A673 (cell line): ENCODE measurements at regions of chr3 and their contacts with region 1.

Region 1: GRCh38 chr3:151838583-151839312 is 24.8 kb downstream of the AADAC start:
- DNase-seq: peak; percentile 93
- H3K4me3 ChIP-seq: peak overlapping the region; percentile 36
- H3K27ac ChIP-seq: peak overlapping the region; percentile 47
- H3K4me1 ChIP-seq: peaks cover 36% of the 10 kb centered on the region
- H3K27me3 ChIP-seq: no peaks in the 10 kb centered on the region
- CTCF ChIP-seq: peak; percentile 92

Region 2: DNA sequence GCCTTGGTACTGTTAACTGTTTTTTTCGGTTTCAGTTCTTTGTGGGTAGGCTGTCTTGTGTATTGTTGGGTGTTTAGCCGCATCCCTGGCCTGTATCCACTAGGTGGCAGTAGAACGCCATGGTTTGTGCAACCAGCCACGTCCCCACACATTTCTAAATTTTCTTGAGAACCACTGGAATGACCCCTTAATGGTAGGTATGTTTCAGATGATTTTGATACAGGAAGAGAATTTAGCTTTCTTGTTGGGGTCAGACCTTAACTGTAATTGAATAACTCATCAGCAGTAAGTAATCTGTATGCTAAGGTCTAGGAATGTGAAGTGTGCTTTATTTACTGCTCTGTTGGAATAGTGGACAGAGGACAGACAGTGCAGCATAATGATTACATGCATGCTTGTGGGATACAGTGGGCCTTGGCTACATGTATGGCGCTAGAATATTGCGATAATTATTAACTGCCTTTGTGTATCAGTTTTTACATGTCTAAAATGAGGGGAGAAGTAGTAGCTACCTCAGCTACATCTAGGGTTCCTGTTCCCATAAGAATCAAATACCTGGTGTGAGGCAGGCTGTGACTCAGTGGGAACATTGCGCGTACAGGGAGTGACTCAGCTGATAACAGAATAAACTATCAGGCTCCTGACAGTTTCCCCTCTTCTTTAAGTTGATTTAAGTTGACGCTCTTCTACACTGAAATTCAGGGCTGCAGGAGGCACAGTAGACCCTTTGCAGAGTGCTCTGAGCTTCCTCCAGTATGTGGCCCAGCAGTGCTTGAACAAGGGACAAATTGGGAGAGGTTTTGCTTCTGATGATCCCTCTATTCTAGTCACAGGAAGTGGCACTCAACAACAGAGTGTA is 610.7 kb before region 1 on chr3:
- CTCF ChIA-PET with region 1: no interaction called
- POLR2A ChIA-PET with region 1: no interaction called
- intact Hi-C with region 1: loop called (anchors 2 kb)
- DNase-seq: peak; percentile 84
- H3K4me3 ChIP-seq: no peak overlapping the region
- H3K27ac ChIP-seq: no peak overlapping the region
- H3K4me1 ChIP-seq: no peaks in the 10 kb centered on the region
- H3K27me3 ChIP-seq: no peaks in the 10 kb centered on the region
- CTCF ChIP-seq: peak; percentile 93

Region 3: DNA sequence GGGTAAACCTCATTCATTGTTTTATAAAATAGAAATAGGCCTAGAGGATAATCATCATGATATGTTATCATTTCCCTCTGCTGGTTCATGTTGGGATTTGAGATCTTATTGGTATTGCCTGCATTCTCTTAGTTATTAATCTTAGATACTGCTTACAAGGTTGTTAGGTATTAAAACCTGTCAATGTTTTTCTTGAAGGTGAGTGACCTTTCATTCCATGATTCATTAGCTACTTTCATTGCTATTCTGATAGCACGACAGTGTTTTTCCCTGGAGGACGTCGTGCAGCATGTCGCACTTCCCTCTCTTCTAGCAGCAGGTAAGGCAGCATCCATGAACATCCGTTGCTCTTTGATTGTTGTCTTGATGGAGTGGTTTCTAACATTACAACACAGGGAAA is 471.3 kb before region 1 on chr3:
- CTCF ChIA-PET with region 1: no interaction called
- POLR2A ChIA-PET with region 1: no interaction called
- intact Hi-C with region 1: loop called (anchors 2 kb)
- DNase-seq: no peak
- H3K4me3 ChIP-seq: no peak overlapping the region
- H3K27ac ChIP-seq: no peak overlapping the region
- H3K4me1 ChIP-seq: no peaks in the 10 kb centered on the region
- H3K27me3 ChIP-seq: no peaks in the 10 kb centered on the region
- CTCF ChIP-seq: no peak

Region 4: DNA sequence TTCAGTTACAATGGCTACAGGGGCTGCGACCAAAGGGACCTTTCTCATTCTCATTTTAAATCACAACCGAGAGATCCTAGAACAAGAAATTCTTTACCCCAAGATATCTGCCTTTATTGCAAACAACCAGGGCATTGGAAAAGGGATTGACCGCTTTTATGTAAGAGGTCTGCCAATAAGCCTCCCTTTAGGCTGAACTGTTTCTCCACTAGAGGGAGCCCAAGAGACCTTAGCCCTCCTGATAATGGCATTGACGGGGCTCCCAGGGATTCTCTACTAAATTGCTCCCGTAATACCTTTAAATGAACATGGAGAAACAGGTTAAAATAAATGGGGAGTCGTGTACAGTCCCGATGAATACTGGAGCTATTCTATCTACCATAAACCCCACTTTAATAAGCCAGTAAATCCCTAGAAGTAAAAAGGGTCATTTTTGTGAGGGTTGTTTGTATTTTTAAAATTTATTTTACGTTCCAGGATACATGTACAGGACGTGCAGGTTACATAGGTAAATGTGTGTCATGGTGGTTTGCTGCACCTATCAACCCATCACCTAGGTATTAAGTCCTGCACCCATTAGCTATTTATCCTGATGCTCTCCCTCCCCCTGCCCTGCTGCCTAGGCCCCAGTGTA is 370.3 kb before region 1 on chr3:
- CTCF ChIA-PET with region 1: no interaction called
- POLR2A ChIA-PET with region 1: no interaction called
- intact Hi-C with region 1: loop called (anchors 1 kb)
- DNase-seq: peak; percentile 81
- H3K4me3 ChIP-seq: no peak overlapping the region
- H3K27ac ChIP-seq: no peak overlapping the region
- H3K4me1 ChIP-seq: no peaks in the 10 kb centered on the region
- H3K27me3 ChIP-seq: no peaks in the 10 kb centered on the region
- CTCF ChIP-seq: peak; percentile 88

Region 5: GRCh38 chr3:151580591-151580990 is 258.2 kb before region 1 on chr3:
- CTCF ChIA-PET with region 1: interaction called, 3 read pairs
- POLR2A ChIA-PET with region 1: no interaction called
- intact Hi-C with region 1: loop called (anchors 2 kb)
- DNase-seq: peak; percentile 94
- H3K4me3 ChIP-seq: peak overlapping the region; percentile 11
- H3K27ac ChIP-seq: peak overlapping the region; percentile 93
- H3K4me1 ChIP-seq: peaks cover 31% of the 10 kb centered on the region
- H3K27me3 ChIP-seq: no peaks in the 10 kb centered on the region
- CTCF ChIP-seq: no peak

Region 6: DNA sequence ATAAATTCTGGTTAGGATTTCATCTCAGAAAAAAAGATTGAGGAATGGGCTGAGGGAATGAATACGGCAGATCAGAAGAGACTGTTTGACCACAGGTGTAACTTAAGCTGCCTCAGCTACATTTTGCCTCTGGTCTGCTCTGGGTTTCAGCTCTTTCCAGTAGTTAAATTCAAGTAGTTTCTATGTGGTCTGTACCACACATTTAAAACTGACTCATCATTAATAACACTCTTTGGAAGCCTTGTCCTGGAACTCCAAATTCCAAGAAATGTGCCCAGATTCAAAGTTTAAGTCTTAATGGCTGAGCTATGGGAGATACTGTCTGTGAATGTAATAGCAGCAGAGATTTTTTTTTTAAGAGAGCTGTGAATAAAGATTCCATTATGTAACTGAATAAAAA is 244.8 kb before region 1 on chr3:
- CTCF ChIA-PET with region 1: no interaction called
- POLR2A ChIA-PET with region 1: no interaction called
- intact Hi-C with region 1: no loop called
- DNase-seq: no peak
- H3K4me3 ChIP-seq: no peak overlapping the region
- H3K27ac ChIP-seq: no peak overlapping the region
- H3K4me1 ChIP-seq: no peaks in the 10 kb centered on the region
- H3K27me3 ChIP-seq: no peaks in the 10 kb centered on the region
- CTCF ChIP-seq: no peak

Region 7: DNA sequence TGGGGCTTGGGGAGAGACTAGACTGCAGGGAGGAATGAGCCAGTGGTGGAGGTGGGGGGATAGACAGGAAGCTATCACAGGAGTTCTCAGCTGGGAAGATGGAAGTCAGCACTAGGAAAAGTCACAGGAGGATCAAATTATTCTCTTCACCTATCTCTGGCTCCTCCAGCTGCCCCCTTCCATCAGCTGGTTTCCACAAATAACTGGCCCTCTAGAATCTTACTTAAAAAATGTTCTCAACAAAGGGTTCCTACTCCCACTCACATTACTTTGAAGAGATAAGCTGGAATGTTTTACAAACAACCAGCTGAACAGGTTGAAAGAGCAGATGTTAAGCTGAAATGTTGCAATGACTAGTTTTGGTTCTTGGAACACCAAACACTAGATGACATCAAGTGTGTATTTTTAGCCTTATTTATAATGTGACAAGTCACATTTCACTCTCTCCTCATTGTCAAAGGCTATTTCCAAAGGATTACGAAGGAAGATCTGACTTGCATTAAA is 207.8 kb before region 1 on chr3:
- CTCF ChIA-PET with region 1: no interaction called
- POLR2A ChIA-PET with region 1: no interaction called
- intact Hi-C with region 1: no loop called
- DNase-seq: peak; percentile 23
- H3K4me3 ChIP-seq: no peak overlapping the region
- H3K27ac ChIP-seq: no peak overlapping the region
- H3K4me1 ChIP-seq: peaks cover 10% of the 10 kb centered on the region
- H3K27me3 ChIP-seq: no peaks in the 10 kb centered on the region
- CTCF ChIP-seq: no peak

Region 8: GRCh38 chr3:151770956-151771355 is 67.8 kb before region 1 on chr3:
- CTCF ChIA-PET with region 1: no interaction called
- POLR2A ChIA-PET with region 1: no interaction called
- intact Hi-C with region 1: loop called (anchors 5 kb)
- DNase-seq: no peak
- H3K4me3 ChIP-seq: no peak overlapping the region
- H3K27ac ChIP-seq: peak overlapping the region; percentile 83
- H3K4me1 ChIP-seq: peaks cover 62% of the 10 kb centered on the region
- H3K27me3 ChIP-seq: no peaks in the 10 kb centered on the region
- CTCF ChIP-seq: no peak